A673 (cell line): ENCODE measurements at regions of chr3 and their contacts with region 1.

Region 1: GRCh38 chr3:158097593-158098308 is 8.5 kb downstream of the SHOX2 start:
- DNase-seq: peak; percentile 63
- H3K4me3 ChIP-seq: peak overlapping the region; percentile 57
- H3K27ac ChIP-seq: no peak overlapping the region
- H3K4me1 ChIP-seq: no peaks in the 10 kb centered on the region
- H3K27me3 ChIP-seq: peaks cover 4% of the 10 kb centered on the region
- CTCF ChIP-seq: no peak

Region 2: GRCh38 chr3:157872902-157873301 is 224.8 kb before region 1 on chr3:
- CTCF ChIA-PET with region 1: no interaction called
- POLR2A ChIA-PET with region 1: no interaction called
- intact Hi-C with region 1: no loop called
- DNase-seq: no peak
- H3K4me3 ChIP-seq: no peak overlapping the region
- H3K27ac ChIP-seq: no peak overlapping the region
- H3K4me1 ChIP-seq: no peaks in the 10 kb centered on the region
- H3K27me3 ChIP-seq: peaks cover 28% of the 10 kb centered on the region
- CTCF ChIP-seq: no peak

Region 3: DNA sequence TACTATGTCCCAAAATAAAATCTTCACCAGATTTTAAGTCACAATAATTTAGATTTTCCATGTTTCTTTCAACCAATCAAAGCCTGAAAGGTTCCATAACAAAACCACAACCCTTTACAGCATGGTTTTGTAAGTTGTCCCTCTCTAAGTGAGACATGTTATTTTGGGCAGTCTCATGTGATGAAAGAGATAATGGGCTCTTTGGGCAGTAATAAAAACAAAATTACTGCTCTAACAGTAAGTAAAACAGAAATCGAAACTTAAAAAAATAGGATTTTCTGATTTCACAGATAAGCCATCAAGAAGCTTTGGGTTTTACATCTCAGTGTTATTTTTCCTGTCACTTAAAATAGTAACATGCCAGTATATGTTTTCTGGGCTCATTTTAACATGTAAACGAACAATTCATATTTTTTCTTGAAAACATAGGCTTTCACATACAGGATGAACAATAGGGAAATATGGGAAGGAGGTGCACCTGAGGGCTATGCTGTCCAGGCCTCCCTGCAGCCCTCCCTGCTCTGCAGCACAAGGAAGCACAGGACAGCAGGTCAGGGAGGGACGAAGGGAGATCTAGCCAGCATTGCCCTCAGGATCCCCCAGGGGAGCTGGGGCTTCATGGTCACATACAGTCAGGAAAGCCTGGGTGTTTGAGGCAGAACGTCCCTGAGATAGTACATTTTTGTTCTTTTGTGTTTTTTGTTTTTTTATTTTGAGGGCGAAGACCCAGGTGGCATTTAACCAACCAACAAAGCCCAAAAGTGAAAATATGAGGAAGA is 149.0 kb before region 1 on chr3:
- CTCF ChIA-PET with region 1: no interaction called
- POLR2A ChIA-PET with region 1: no interaction called
- intact Hi-C with region 1: no loop called
- DNase-seq: no peak
- H3K4me3 ChIP-seq: no peak overlapping the region
- H3K27ac ChIP-seq: no peak overlapping the region
- H3K4me1 ChIP-seq: no peaks in the 10 kb centered on the region
- H3K27me3 ChIP-seq: no peaks in the 10 kb centered on the region
- CTCF ChIP-seq: no peak

Region 4: DNA sequence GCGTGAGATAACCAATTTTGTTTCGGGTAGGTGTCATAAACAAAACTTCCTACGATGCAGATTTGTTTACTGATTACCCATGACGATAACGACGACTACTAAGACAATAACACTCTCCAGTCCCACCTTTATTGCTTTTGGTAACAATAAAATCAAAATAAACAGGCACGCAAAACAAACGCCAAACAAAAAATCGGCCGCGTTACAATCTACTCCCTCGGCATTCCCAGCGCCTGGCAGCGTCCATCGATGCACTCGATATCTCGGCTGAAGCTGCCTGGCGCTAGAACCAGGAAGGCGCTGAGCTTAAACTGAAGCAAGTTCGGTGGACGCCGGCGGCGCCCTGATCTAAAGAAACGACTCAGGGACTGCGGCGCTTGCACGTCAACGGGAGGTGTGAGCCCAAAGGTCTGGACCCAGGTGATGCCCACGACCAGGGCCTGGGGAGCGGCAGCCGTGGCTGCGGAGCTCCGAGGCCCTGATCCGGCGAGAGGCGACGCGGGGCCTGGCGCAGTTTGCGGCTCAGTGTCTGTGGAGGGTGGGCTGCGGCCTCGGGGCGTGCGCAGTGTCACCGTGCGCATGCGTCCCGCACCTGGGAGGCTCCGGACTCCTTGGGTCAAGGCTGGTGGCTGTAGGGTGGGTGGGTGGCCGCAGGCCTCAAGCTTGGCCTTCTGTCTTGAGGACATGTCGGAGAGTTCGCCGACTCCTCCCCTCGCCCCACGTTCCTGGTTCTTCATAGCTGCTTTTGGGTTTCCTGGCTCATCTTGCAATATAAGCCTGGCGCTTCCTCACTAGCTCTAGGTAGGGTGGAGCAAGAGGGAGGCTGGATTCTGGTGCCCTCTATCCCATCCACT is 12.3 kb after region 1 on chr3 and contains the start of gene RSRC1:
- CTCF ChIA-PET with region 1: no interaction called
- POLR2A ChIA-PET with region 1: no interaction called
- intact Hi-C with region 1: no loop called
- DNase-seq: peak; percentile 93
- H3K4me3 ChIP-seq: peak within 1 kb of the TSS; percentile 64
- H3K27ac ChIP-seq: peak within 1 kb of the TSS; percentile 87
- H3K4me1 ChIP-seq: peaks cover 2% of the 10 kb centered on the region
- H3K27me3 ChIP-seq: no peaks in the 10 kb centered on the region
- CTCF ChIP-seq: no peak
- total RNA-seq, gene RSRC1: 59.4 and 65.4 TPM in 2 replicates

Region 5: GRCh38 chr3:158313338-158313927 is 215.7 kb after region 1 on chr3:
- CTCF ChIA-PET with region 1: no interaction called
- POLR2A ChIA-PET with region 1: no interaction called
- intact Hi-C with region 1: loop called (anchors 5 kb)
- DNase-seq: peak; percentile 64
- H3K4me3 ChIP-seq: no peak overlapping the region
- H3K27ac ChIP-seq: no peak overlapping the region
- H3K4me1 ChIP-seq: no peaks in the 10 kb centered on the region
- H3K27me3 ChIP-seq: no peaks in the 10 kb centered on the region
- CTCF ChIP-seq: peak; percentile 71

Region 6: DNA sequence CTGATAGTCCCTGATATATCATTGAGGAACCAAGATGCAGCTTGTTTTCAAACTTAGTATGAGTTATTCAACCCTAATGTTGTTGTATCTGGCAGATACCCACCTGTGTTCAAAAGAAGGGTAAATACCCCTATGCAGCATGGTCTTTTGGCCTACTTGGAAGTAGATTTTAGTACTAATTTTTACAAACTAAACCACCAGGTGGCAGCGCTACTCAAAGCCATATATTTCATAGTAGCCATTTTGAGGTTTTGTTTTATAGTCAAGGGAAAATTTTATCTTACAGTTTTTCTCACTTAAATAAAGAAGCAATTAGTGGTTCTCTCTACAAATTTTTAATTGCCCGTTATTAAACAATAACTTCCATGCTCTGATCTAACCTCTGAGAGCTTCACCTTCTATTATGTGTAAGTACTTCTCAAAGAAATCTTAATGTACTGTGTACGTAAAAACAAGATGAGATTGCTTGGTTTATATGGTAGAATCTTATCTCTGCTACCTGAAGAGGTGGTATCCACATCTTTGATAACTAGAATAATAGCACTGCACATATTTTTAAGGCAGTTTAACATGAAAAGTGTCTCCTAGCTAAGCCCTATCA is 441.8 kb after region 1 on chr3:
- CTCF ChIA-PET with region 1: no interaction called
- POLR2A ChIA-PET with region 1: no interaction called
- intact Hi-C with region 1: loop called (anchors 10 kb)
- DNase-seq: peak; percentile 59
- H3K4me3 ChIP-seq: no peak overlapping the region
- H3K27ac ChIP-seq: no peak overlapping the region
- H3K4me1 ChIP-seq: no peaks in the 10 kb centered on the region
- H3K27me3 ChIP-seq: no peaks in the 10 kb centered on the region
- CTCF ChIP-seq: peak; percentile 68